ENCODE measurements at regions of chr15 and their contacts with region 1.

Region 1: DNA sequence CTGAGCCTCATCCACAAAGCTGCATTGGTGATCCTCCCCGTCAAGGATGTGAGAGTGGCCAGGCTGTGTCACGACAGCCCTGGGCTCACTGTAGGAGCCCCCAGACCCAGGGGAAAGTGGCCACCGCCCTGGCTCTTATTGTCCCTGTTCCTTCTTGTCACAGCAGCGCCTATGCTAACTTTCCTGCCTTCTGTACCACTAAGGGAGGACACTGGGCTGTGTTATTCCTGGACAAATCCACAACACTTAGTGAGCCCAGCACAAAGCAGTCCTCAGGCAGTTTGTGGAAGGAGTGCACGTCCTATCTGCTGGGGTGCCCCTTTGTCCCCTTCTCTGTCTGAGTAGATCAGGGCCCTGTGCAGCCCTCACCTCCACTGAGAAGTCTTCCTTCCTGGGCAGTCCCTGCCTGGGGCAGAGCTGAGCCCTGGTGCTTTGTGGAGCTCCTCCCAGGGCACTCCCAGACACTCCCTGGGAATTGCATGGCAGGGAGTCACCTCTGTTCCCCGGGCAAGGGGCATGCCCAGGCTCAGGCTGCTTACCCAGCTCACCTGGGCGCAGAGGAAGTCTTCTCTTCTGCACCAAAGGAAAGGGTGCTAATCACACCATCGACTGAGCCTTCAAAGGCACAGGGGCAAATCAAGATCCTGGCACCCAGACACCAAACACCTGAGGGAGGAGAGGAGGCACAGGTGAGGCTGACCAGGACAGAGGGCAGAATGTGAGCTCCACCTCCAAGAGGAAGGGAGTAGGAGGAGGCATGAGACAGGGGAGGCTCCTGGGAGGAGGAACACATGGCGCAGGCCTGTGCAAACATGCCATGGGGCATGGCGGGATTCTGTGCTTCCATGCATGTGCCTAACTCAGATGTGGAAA is 138.7 kb downstream of the KLF13 start:
- DNase-seq: peak; percentile 90
- H3K4me3 ChIP-seq: peak overlapping the region in 1 of 3 experiments; percentile 1
- H3K27ac ChIP-seq: peak overlapping the region; percentile 84
- H3K4me1 ChIP-seq: peaks cover 15% of the 10 kb centered on the region
- H3K27me3 ChIP-seq: no peaks in the 10 kb centered on the region
- CTCF ChIP-seq: no peak

Region 2: GRCh38 chr15:31391687-31392671 is 73.3 kb before region 1 on chr15:
- CTCF ChIA-PET with region 1: no interaction called
- dilution Hi-C with region 1: no loop called
- in situ Hi-C with region 1: no loop called
- intact Hi-C with region 1: no loop called
- DNase-seq: peak; percentile 41
- H3K4me3 ChIP-seq: peak overlapping the region; percentile 63 to 79 (median 68)
- H3K27ac ChIP-seq: peak overlapping the region; percentile 12
- H3K4me1 ChIP-seq: peaks cover 30% of the 10 kb centered on the region
- H3K27me3 ChIP-seq: no peaks in the 10 kb centered on the region
- CTCF ChIP-seq: no peak

Region 3: GRCh38 chr15:31442203-31443111 is 22.9 kb before region 1 on chr15:
- CTCF ChIA-PET with region 1: no interaction called
- dilution Hi-C with region 1: no loop called
- in situ Hi-C with region 1: no loop called
- intact Hi-C with region 1: loop called (anchors 1 kb)
- DNase-seq: peak; percentile 82
- H3K4me3 ChIP-seq: no peak overlapping the region
- H3K27ac ChIP-seq: peak overlapping the region; percentile 56
- H3K4me1 ChIP-seq: peaks cover 29% of the 10 kb centered on the region
- H3K27me3 ChIP-seq: no peaks in the 10 kb centered on the region
- CTCF ChIP-seq: peak in 1 of 2 donors; percentile 33

Region 4: DNA sequence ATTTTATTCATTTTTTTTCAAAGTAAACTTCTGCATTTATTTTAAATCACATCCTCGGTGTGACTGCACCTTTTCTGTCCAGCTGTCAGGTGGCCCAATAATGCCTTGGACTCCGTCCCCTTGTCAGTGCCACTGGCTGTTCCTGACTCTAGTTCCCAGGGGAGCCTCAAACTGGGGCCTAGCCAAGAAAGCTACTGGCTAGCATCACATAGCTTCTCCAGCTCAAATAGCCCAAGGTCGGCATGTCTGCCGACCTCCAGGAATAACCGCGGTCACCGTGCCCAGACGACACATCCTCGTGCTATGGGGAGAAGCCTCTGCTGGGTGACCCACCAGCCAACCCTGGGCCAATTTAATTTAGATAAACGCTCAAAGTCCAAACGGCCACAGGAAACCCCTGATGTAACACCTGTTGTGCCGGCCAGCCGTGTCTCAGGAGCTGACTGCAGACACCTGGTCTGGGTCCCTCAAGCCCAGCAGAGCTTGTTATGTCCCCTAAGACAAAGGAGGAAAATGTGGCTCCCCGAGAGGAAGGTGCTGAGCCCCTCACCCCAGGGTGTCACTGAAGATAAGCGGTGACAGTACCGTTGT is 12.6 kb before region 1 on chr15:
- CTCF ChIA-PET with region 1: no interaction called
- dilution Hi-C with region 1: no loop called
- in situ Hi-C with region 1: no loop called
- intact Hi-C with region 1: no loop called
- DNase-seq: no peak
- H3K4me3 ChIP-seq: no peak overlapping the region
- H3K27ac ChIP-seq: no peak overlapping the region
- H3K4me1 ChIP-seq: peaks cover 9% of the 10 kb centered on the region
- H3K27me3 ChIP-seq: no peaks in the 10 kb centered on the region
- CTCF ChIP-seq: no peak

Region 5: GRCh38 chr15:31768055-31768454 is 302.7 kb after region 1 on chr15:
- CTCF ChIA-PET with region 1: no interaction called
- dilution Hi-C with region 1: no loop called
- in situ Hi-C with region 1: no loop called
- intact Hi-C with region 1: no loop called
- DNase-seq: no peak
- H3K4me3 ChIP-seq: no peak overlapping the region
- H3K27ac ChIP-seq: no peak overlapping the region
- H3K4me1 ChIP-seq: no peaks in the 10 kb centered on the region
- H3K27me3 ChIP-seq: no peaks in the 10 kb centered on the region
- CTCF ChIP-seq: no peak